B cell (primary cell): ENCODE measurements at regions of chr4 and their contacts with region 1.

Region 1: GRCh38 chr4:42678512-42678911 is 21.6 kb upstream of the ATP8A1 start:
- DNase-seq: peak; percentile 22
- ATAC-seq: no peak
- H3K4me3 ChIP-seq: no peak overlapping the region
- H3K4me3 Mint-ChIP-seq: no peak overlapping the region
- H3K27ac ChIP-seq: peak overlapping the region in 1 of 2 donors; percentile 36
- H3K27ac Mint-ChIP-seq: no peak overlapping the region
- H3K4me1 ChIP-seq: peaks cover 3 to 11% of the 10 kb centered on the region in 2 donors
- H3K4me1 Mint-ChIP-seq: peaks cover 3% of the 10 kb centered on the region
- H3K27me3 ChIP-seq: no peaks in the 10 kb centered on the region
- H3K27me3 Mint-ChIP-seq: no peaks in the 10 kb centered on the region
- CTCF ChIP-seq: no peak

Region 2: GRCh38 chr4:42816189-42816879 is 137.8 kb after region 1 on chr4:
- CTCF ChIA-PET with region 1: interaction called, 11 read pairs
- POLR2A ChIA-PET with region 1: no interaction called
- intact Hi-C with region 1: no loop called
- DNase-seq: peak; percentile 6
- ATAC-seq: no peak
- H3K4me3 ChIP-seq: no peak overlapping the region
- H3K4me3 Mint-ChIP-seq: no peak overlapping the region
- H3K27ac ChIP-seq: no peak overlapping the region
- H3K27ac Mint-ChIP-seq: peak overlapping the region; percentile 39
- H3K4me1 ChIP-seq: peaks cover 11 to 17% of the 10 kb centered on the region in 2 donors
- H3K4me1 Mint-ChIP-seq: peaks cover 15% of the 10 kb centered on the region
- H3K27me3 ChIP-seq: peaks cover 0 to 8% (median 0%) of the 10 kb centered on the region in 4 experiments
- H3K27me3 Mint-ChIP-seq: peaks cover 5% of the 10 kb centered on the region
- CTCF ChIP-seq: no peak